RWPE1 (cell line): ENCODE measurements at regions of chr10 and their contacts with region 1.

Region 1: GRCh38 chr10:97714048-97714371 is 480 bp downstream of the MARVELD1 start:
- DNase-seq: peak; percentile 67
- H3K27ac ChIP-seq: peak overlapping the region; percentile 99
- CTCF ChIP-seq: peak; percentile 13; the same call in 1 of the 2 replicates

Region 2: DNA sequence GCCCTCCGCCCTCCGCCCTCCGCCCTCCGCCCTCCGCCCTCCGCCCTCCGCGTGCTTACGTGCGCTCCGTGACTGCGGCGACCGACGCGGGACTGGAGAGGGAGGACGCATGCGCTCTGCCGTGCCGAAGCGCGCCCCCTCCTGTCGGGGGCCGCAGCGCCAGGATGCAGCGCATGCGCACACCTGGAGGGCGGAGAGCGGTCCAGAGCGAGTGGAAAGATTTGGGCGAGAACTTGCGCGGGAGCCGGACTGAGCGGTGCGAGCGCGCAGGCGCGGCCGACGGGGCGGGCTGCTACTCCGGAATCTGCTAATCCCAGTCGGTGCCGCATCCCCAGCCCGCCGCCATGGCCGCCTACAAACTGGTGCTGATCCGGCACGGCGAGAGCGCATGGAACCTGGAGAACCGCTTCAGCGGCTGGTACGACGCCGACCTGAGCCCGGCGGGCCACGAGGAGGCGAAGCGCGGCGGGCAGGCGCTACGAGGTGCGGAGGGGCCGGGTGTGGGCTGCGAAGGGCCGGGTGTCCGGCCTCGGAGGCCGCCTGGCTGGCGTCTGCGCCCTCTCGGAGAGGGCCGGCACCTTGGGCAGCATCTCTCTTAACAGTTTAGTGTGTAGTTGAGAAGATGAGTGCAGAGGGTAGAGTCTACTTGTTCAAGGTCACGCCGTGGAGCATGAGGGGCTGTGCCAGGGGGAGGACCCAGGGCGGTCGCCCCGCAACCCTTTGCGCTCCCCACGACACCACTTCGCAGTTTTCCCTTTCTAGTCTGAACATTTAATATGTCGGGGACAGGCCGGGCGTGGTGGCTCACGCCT is 287.8 kb before region 1 on chr10 and contains the start of gene PGAM1:
- CTCF ChIA-PET with region 1: no interaction called
- POLR2A ChIA-PET with region 1: no interaction called
- DNase-seq: peak; percentile 100
- H3K27ac ChIP-seq: peak within 1 kb of the TSS; percentile 94
- CTCF ChIP-seq: peak; percentile 80

Region 3: DNA sequence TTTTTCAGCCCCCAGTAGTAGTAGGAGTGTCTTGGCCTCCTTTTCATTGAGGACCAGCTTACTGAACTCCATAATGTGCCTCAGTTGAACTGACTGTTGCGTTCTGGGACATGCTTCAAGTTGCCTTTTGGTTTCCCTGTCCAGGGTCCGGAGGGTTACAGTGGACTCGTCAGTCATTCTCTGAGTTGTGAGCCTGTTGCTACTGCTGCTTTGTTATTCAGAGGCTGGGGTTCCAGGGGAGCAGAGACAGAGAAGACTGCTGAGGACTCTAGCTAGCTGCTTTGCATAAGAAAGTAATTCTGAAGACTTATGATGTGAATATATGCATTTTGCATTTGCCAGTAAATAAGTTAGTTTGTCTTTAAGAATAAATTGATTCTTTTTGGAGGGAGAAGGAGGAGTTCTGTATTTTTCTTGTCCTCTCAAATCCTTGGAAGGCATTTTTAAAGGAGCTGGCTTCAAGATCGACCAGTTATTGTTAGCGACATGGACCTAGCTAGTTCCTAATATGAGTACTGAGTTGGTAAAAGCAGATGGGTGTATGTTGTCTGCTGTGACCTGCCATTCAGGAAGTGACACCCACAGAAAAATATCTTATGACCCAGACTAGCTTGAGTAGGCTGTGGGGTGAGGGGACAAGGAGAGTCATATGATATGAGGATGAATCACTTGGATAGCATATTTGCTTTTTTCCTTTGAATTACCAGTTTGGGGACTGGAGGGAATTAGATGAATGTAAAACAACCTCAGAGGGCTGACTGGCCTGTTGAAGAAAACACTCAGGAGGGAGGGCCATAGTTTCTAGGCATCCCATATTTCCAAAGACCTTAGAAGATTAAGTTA is 65.2 kb before region 1 on chr10:
- CTCF ChIA-PET with region 1: no interaction called
- POLR2A ChIA-PET with region 1: no interaction called
- DNase-seq: peak; percentile 89
- H3K27ac ChIP-seq: peak overlapping the region; percentile 91
- CTCF ChIP-seq: no peak

Region 4: DNA sequence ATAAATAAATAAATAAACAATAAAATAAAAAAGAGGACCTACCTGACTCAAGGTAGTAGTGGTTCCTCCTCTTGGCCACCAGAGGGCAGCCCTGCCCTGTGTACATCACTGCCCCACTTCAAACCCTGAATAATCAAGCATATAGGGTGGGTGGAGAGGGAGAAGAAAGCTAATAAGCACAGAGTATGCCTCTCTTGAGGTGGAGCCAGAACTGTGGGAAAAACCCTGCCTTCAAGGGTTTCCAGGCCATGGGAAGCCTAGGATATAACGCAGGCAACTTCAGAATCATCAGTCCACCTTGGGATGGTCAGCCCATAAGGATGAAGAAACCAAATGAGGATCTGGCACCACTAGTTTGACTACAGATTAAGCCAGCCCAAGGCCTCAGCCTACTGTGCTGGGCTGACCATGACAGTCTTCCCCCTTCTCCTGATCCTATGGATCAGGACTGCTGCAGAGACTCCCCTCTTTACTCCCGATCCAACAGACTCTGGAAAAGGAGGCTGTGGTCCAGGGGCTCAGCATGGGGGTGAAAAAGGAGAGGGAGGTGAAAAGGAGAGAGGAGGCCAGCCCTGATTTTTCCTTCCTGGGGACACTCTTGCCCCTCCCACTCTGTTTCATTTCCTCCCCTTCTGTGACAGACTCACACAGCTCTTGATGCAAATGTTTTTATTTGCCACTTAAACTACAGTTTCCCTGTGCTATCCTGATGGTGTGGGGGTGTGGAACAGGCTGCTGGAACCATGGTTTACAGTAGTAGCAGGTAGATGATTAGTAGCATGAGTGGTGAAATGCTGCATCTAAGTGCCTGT is 37.0 kb before region 1 on chr10:
- CTCF ChIA-PET with region 1: interaction called, 16 read pairs
- POLR2A ChIA-PET with region 1: no interaction called
- DNase-seq: peak; percentile 90
- H3K27ac ChIP-seq: peak overlapping the region; percentile 65
- CTCF ChIP-seq: peak; percentile 76

Region 5: DNA sequence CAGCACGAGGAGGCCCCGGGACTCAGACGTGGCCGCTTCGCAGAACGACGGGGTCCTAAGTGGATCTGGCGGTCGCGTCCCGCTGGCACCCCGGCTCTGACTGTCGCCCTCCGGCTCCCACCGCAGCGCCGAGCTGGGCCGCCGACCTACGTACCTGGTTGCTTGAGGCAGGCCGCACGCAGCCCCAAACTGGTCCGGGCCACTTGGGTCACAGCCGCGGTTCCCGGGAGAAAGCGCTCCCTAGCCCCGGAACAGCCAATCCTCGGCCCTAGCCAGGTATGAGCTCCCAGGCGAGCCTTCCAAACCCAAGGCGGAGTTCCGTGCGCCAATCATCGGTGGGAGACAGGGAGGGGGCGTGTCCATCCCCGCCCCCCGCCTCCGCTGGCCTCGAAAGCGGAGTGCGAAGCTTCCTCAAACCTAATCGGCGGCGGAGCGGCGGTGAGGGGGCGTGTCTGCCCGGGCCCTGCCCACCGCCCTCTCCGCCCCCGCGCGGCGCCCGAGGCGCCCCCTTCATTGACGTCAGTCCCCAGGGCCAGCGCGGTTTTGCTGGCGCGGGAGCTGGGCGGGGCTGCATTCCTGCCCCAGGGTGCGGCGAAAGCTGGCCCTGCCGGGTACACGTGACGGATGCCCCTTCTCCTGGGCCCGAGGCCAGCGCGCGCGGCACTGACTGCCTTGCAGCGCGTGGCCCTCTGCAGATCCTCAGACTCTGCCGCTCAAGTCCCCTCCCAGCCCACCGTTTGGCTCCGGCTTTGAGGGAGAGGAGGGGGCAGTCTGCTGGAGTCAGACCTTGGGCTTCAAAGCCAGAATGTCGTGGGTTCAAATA is 26.8 kb before region 1 on chr10 and contains the start of gene AVPI1:
- CTCF ChIA-PET with region 1: interaction called, 10 read pairs
- POLR2A ChIA-PET with region 1: interaction called, 15 read pairs
- DNase-seq: peak; percentile 99
- H3K27ac ChIP-seq: peak within 1 kb of the TSS; percentile 96
- CTCF ChIP-seq: no peak

Region 6: GRCh38 chr10:97724341-97724941 is 10.4 kb after region 1 on chr10:
- CTCF ChIA-PET with region 1: interaction called, 122 read pairs
- POLR2A ChIA-PET with region 1: interaction called, 6 read pairs
- DNase-seq: no peak
- H3K27ac ChIP-seq: peak overlapping the region; percentile 86
- CTCF ChIP-seq: no peak

Region 7: DNA sequence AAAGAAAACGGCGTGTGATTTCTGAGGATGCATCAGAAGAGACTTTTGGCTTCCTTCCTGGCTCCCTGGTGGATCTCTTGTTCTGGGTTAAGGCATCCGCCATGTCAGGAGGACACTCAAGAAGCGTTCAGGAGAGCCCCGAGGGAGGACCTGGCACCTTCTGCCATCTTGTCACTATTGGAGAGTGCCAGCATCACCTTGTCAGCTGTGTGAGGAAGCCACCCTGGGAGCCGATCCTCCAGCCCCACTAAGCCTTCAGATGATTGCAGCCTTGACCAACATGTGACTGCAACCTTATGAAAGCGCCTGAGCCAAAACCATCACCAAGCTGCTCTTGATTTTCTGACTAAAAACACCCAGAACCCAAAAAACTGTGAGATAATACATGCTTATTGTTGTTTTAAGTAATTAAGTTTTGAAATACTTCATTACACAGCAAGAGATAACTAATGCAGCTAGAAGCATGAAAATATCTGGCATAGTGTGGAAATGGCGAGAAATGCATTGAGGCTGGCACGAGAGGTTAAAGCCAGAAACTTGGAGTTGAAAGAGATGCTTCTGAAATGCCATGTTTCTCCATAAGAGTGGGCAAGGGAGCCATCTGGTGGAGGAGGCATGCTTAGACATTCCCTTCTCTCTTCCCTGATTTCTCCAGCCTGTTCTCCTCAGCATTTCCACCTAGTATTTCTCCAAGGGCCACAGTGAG is 17.5 kb after region 1 on chr10:
- CTCF ChIA-PET with region 1: interaction called, 122 read pairs
- POLR2A ChIA-PET with region 1: interaction called, 6 read pairs
- DNase-seq: peak; percentile 73
- H3K27ac ChIP-seq: peak overlapping the region; percentile 45
- CTCF ChIP-seq: peak; percentile 86

Region 8: DNA sequence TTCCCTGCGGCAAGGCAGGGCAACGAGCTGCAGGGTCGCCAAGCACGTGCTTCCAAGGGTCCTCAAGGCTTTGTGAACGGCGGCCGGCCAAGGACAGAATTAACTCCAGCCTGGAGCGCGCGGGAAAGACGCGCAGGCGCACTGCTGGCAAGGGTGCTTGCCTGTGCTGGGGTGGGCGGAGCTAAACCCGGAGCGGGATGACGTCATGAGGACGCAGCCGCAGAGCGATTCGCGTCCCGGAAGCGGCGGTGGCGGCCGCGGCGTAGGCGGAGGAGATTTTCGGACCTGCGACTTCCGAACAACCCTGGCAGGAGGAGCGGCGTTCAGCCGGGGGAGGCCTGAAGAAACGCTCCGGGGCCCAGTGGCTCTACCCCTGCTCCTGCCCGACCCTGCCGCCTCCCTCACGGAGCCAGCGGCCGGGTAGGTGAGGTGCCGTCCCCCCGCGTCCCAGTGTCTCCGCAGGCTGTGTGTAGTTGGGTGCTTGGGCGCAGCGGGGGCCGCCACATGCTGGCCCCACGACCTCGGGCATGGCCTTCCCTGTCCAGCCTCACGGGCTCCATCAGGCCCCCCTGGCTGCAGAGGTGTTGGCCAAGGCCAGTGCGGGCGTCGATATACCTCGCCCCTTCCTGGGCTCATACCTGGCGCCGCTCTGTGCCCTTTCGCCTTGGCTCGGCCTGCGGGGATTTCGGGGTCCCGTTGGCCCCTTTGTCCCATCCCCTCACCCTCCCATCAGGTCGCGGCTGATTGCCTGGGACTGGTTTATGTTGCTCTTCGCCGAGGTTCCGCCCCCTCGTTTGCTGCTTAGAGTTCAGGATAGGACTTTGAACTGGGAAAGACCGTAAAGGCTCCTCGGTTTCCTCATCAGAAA is 23.1 kb after region 1 on chr10 and contains the start of gene ZFYVE27:
- CTCF ChIA-PET with region 1: interaction called, 122 read pairs
- POLR2A ChIA-PET with region 1: interaction called, 6 read pairs
- DNase-seq: peak; percentile 100
- H3K27ac ChIP-seq: peak within 1 kb of the TSS; percentile 85
- CTCF ChIP-seq: no peak